Right ventricle myocardium superior (tissue), 1 donor: ENCODE measurements at regions of chr5 and their contacts with region 1.

Region 1: DNA sequence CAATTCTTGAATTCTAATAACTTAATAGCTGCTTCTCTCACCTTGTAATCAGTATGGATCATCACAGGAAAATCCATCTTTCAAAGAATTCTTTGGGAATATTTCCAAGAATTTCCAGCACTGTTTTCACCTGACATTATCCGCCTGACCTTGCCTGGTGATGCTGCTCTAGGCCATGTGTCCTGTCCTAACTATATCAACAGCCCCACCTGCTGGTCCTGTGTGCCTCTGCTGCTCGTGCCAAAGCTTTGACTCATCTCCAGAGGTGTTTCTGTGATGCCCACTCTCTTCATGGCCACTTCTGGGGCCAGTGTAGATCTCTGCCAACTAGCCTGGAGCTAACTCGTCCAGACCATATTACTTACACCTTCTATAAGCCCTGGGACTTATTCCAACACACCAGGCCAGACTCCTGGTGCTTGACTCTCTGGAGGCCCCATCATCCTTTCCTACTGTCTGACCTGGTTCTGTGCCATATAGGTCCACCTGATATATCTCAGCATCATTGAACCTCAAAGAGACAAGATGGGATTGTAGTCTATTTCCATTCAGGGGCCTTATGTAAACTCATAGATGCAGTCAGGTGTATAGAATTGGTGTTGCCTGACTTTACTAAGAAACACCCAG is 67.5 kb upstream of the CKMT2 start:
- DNase-seq: peak; percentile 61
- ATAC-seq: peak; percentile 53

Region 2: GRCh38 chr5:80799041-80799440 is 366.6 kb before region 1 on chr5:
- intact Hi-C with region 1: loop called (anchors 10 kb)
- DNase-seq: peak; percentile 46
- ATAC-seq: peak; percentile 20

Region 3: GRCh38 chr5:81097713-81098112 is 67.9 kb before region 1 on chr5:
- intact Hi-C with region 1: no loop called
- DNase-seq: no peak
- ATAC-seq: no peak

Region 4: GRCh38 chr5:81233080-81233634 is 67.6 kb after region 1 on chr5 and contains the start of gene CKMT2:
- intact Hi-C with region 1: no loop called
- DNase-seq: peak; percentile 92
- ATAC-seq: peak; percentile 81
- total RNA-seq, gene CKMT2: 1,933 TPM

Region 5: DNA sequence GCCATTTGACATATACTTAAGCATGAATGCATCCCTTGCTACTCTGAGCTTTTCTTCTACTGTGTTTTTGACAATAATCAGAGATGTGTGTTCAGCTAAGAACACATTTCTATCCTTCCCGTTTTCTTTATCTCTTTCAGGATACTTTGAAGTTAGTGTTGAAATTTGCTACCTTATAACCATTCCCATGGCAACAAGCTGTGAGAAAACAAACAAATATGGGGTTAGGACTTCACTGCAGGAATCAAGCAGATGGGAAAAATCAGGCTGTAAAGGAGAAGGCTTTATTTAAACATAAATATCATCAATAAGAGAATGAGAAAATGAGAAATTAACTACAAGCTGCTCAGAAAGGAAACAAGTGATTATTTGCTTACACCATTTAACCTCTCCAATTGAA is 170.9 kb after region 1 on chr5:
- intact Hi-C with region 1: no loop called
- DNase-seq: no peak
- ATAC-seq: no peak